ENCODE measurements at regions of chr4 and their contacts with region 1.

Region 1: DNA sequence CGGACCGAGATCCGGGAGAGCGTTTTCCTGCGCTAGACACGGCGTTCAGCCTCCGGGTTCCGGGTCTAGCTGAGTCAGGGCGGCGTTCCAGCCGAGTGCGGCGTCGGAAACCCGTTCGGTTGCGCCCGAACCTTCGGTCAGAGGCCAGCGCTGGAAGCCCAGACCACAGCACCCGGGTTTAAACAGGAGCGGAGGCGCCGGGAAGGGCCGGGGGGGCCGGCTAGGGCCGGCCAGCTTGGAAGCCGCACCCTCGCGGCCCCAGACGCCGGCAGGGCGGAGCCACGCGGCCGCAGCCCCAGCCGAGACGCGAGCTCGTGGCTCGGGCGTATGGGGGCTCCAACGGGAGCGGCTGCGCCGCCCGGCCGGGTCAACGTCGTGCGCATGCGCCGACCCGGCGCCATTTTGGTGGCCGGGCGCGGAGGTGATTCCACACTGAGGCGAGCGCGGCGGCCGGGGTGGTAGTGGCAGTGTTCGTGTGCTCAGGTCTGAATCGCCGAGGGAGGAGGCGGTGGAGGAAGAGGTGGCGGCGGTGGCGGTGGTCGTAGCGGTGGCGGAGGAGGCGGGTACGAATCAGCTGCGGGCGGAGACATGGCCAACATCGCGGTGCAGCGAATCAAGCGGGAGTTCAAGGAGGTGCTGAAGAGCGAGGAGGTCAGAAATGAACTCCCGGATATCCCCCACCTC is at the start of gene UBE2K:
- DNase-seq: peak; percentile 93
- ATAC-seq: peak; percentile 87
- H3K4me3 Mint-ChIP-seq: peak within 1 kb of the TSS; percentile 99
- H3K27ac Mint-ChIP-seq: peak within 1 kb of the TSS; percentile 99
- H3K4me1 Mint-ChIP-seq: peaks cover 28% of the 10 kb centered on the region
- H3K27me3 Mint-ChIP-seq: no peaks in the 10 kb centered on the region
- total RNA-seq, gene UBE2K: 87.2 to 122 TPM

Region 2: DNA sequence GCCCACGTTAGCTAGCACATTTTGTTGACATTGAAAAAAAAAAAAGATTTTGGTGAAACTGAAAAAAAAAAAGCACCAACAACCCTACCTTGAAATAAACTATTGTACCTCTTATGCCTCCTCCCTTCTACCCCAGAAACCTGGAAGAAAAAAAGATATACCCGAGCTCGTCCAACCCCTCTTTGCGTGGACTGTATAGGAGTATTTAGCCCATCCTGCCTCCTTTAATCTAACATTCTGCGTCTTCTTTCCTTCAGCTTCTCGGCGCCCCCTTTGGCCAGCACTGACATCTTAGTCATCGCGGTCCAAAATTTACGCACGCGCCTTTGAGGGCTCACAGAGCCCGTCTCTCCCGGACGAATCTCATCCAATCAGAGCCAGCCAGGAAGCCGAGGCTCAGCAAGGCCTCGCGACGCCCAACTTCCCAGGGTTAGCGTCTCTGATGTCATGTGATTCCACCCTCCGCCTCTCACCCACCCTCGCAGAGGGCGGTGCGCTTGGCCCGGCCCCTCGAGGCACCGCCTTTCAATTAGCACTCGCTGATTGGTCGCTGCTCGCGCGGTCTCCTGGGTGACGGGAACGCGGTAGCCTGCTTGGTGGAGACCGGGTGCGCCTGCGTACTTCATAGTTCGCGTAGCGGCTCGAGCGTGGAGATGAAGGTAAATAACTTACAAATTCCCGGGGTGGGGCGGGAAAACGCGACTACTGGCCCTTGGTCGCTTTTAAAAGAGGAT is 515.8 kb before region 1 on chr4 and contains the start of gene WDR19:
- CTCF ChIA-PET with region 1: no interaction called
- POLR2A ChIA-PET with region 1: no interaction called
- intact Hi-C with region 1: loop called in 1 of 2 experiments (anchors 1 kb)
- DNase-seq: peak; percentile 99
- ATAC-seq: peak; percentile 99
- H3K4me3 Mint-ChIP-seq: no peak within 1 kb of the TSS
- H3K27ac Mint-ChIP-seq: no peak within 1 kb of the TSS
- H3K4me1 Mint-ChIP-seq: peaks cover 8% of the 10 kb centered on the region
- H3K27me3 Mint-ChIP-seq: peaks cover 3% of the 10 kb centered on the region
- total RNA-seq, gene WDR19: 12.1 to 16.2 TPM

Region 3: DNA sequence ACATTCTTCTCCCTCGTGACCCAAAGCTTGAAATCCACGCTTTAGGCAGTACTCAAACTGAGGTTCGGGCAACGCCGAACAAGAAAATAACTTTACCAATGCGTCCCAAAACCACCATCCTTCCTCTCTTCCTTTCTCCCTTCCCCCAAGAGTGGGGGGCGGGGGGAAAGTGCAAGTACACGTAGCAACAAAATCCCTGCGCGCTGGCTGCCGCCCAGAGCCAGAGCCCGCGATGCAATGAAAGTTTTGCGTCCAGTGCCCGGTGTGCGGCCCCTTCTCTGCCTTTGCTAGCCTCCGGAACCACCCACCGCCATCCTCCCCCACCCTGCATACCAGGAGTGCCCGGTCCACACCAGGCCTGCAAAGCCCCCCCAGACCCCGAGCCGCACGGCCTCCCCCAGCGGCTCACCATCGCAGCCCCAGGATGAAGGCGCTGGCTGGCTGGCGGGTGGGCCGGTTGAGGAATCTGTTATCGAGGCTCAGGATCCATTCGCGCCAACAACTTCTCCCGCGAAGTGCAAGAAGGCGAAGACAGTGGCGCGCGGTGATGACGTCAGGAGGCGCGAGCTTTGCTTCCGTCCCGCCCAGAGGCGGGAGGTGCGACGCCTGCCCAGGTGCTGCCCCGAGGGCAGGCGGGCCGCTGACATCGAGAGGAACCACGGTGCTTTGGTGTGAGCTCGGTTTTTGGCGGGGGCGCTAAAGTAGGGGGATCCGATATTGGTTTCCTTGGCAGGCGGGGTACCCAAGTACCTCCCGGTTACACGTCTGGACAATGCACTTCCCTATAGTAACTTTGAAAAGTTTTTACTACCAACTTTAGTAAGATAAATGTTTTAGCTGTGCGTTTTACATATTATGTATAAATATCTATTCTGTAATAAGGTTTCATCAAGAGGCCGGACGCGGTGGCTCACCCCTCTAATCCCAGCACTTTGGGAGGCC is 331.8 kb before region 1 on chr4 and contains the start of gene RFC1:
- CTCF ChIA-PET with region 1: no interaction called
- POLR2A ChIA-PET with region 1: no interaction called
- intact Hi-C with region 1: loop called in 1 of 2 experiments (anchors 5 kb)
- DNase-seq: peak; percentile 97
- ATAC-seq: peak; percentile 90
- H3K4me3 Mint-ChIP-seq: peak within 1 kb of the TSS; percentile 98
- H3K27ac Mint-ChIP-seq: peak within 1 kb of the TSS; percentile 97
- H3K4me1 Mint-ChIP-seq: peaks cover 32% of the 10 kb centered on the region
- H3K27me3 Mint-ChIP-seq: no peaks in the 10 kb centered on the region
- total RNA-seq, gene RFC1: 112 to 216 TPM

Region 4: DNA sequence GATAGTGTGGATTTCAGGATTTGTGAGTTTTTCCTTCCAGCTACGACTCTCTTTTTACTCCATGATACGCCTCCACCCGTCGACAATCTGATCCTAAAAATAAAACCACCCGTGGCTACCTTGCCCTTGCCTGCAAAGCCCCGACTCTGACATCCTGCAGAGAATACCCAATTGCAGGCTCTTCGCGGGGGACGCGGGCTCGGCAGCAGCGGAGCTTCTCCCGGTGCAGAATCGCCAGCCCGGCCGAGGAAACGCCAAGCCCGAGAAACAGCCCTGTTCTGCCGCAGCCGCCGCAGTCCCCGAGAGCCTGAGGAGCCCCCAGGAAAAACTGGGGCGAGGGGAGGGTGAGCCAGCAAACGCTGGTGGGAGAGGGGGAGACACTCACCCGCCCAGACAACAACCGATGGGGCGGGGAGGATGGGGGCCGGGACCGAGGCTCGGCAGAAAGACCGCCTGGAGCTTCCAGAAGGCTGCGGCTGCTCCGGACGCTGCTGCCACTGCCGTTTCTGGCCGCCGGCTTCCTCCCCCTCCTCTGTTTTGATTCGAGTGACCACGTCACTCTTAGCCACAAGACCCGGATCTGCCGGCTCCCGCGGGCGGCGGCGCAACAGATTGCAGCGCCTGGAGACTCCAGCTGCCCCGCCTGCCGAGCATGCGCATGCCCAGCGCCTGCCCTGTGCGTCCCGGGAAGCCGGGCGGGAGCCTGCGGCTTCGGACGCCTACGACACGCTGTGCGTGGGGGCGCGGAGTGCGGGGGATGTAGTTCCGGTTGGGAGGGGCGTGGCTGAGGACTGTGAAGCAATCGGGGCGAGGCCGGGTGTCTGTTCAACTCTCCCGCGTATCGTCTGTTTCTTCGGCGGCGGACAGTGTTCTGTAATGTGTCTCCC is 59.3 kb before region 1 on chr4 and contains the start of gene SMIM14:
- CTCF ChIA-PET with region 1: interaction called, 3 read pairs
- POLR2A ChIA-PET with region 1: interaction called, 4 read pairs
- intact Hi-C with region 1: loop called in 1 of 2 experiments (anchors 1 kb)
- DNase-seq: peak; percentile 94
- ATAC-seq: peak; percentile 87
- H3K4me3 Mint-ChIP-seq: peak within 1 kb of the TSS; percentile 83
- H3K27ac Mint-ChIP-seq: peak within 1 kb of the TSS; percentile 86
- H3K4me1 Mint-ChIP-seq: peaks cover 33% of the 10 kb centered on the region
- H3K27me3 Mint-ChIP-seq: no peaks in the 10 kb centered on the region
- total RNA-seq, gene SMIM14: 1.4 to 2.0 TPM

Region 5: DNA sequence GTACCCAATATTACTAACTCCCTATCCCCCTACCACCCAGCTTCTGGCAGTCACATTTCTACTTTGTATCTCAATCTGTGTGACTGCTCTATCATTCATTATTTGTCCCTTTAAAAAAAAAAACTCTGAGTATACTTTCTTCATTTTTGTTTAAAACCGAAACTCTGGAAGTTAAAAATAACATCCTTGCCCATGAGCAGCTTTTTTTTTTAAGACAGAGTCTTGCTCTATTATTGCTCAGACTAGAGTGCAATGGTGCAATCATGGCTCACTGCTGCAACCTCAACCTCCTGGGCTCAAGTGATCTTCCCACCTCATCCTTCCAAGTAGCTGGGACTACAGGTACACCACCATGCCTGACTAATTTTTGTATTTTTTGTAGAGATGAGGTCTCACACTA is 15.8 kb after region 1 on chr4:
- CTCF ChIA-PET with region 1: interaction called, 3 read pairs
- POLR2A ChIA-PET with region 1: interaction called, 3 read pairs
- intact Hi-C with region 1: loop called in 1 of 2 experiments (anchors 1 kb)
- DNase-seq: no peak
- ATAC-seq: peak; percentile 49
- H3K4me3 Mint-ChIP-seq: no peak overlapping the region
- H3K27ac Mint-ChIP-seq: no peak overlapping the region
- H3K4me1 Mint-ChIP-seq: peaks cover 55% of the 10 kb centered on the region
- H3K27me3 Mint-ChIP-seq: no peaks in the 10 kb centered on the region

Region 6: DNA sequence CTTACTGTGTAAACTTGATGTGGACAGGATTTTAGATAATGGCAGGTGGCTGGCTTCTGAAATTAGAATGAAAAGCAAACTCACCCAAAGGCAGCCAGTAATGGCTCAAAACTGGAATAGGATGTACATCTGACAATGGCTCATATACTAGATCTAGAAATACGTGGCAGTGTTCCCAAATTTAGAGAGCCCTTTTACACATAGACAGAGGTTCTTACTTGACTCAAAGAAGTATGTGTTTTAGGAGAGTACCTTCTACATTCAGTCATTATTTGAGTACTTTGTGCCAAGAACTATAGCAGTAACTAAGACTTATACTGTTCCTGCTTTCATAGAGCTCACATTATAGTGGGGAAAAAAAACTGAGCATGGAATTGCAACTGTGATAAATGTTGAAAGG is 48.0 kb after region 1 on chr4:
- CTCF ChIA-PET with region 1: no interaction called
- POLR2A ChIA-PET with region 1: no interaction called
- intact Hi-C with region 1: loop called in 1 of 2 experiments (anchors 5 kb)
- DNase-seq: no peak
- ATAC-seq: peak; percentile 60
- H3K4me3 Mint-ChIP-seq: no peak overlapping the region
- H3K27ac Mint-ChIP-seq: no peak overlapping the region
- H3K4me1 Mint-ChIP-seq: peaks cover 15% of the 10 kb centered on the region
- H3K27me3 Mint-ChIP-seq: no peaks in the 10 kb centered on the region

Region 7: GRCh38 chr4:39814403-39815185 is 116.7 kb after region 1 on chr4:
- CTCF ChIA-PET with region 1: no interaction called
- POLR2A ChIA-PET with region 1: no interaction called
- intact Hi-C with region 1: loop called (anchors 5 to 10 kb)
- DNase-seq: peak; percentile 37
- ATAC-seq: peak; percentile 37
- H3K4me3 Mint-ChIP-seq: peak overlapping the region; percentile 32
- H3K27ac Mint-ChIP-seq: no peak overlapping the region
- H3K4me1 Mint-ChIP-seq: peaks cover 2% of the 10 kb centered on the region
- H3K27me3 Mint-ChIP-seq: no peaks in the 10 kb centered on the region

Measured in activated CD4-positive, alpha-beta T cell treated with anti-CD3 and anti-CD28 coated beads for 36 hours (primary cell).